GM12878 (cell line): ENCODE measurements at regions of chr6 and their contacts with region 1.

Region 1: DNA sequence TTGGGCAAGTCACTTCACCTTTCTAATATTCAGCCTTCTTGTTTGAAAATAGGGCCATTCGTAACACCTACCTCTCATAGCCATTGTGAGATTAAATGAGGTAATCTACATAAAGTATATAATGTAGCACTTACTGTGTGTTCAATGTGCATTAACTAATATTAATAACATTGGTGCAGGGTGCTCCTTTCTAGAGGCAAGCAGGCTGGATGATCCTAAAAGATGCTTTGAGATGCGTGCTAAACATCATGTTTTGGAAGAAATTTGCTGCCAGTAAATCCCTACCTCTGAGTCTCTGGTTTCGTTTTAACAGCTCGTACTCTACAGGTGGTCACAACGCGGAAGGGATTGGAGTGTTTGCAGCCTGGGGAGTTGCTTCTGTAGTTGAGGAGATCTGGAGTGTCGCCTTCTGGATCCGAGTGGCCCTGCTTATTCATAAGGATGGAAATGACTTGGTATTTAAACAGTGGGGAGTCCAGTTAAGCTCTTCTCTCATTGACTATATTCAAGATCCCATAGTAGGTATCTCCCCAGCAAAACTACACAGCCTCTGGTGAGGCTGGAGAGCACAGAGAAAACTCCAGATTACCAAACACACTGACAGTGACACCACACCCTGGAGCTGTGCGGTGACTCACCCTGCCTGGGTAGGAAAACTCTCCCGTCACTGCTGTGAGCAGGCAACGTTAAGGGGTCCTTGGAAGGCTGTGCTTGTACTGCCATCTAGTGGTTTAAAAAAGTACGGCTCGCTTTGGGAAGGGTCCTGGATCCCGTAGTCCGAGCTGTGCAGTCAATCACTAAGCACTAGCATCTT is 107.9 kb downstream of the MAP3K7 start:
- DNase-seq: peak; percentile 41
- ATAC-seq: peak; percentile 96
- H3K4me3 ChIP-seq: 0 out of 2 replicates have a peak overlapping the region, but pooled peaks have one; percentile 15
- H3K27ac ChIP-seq: no peak overlapping the region
- H3K4me1 ChIP-seq: peaks cover 4% of the 10 kb centered on the region
- H3K27me3 ChIP-seq: peaks cover 0 to 4% of the 10 kb centered on the region in 2 experiments; a peak in 1 of 4 replicates
- CTCF ChIP-seq: peak; percentile 72 to 95 (median 80); a peak in 5 of 6 replicates
- EP300 ChIP-seq: no peak
- POLR2A ChIP-seq: no peak
- RAD21 ChIP-seq: peak; percentile 99

Region 2: DNA sequence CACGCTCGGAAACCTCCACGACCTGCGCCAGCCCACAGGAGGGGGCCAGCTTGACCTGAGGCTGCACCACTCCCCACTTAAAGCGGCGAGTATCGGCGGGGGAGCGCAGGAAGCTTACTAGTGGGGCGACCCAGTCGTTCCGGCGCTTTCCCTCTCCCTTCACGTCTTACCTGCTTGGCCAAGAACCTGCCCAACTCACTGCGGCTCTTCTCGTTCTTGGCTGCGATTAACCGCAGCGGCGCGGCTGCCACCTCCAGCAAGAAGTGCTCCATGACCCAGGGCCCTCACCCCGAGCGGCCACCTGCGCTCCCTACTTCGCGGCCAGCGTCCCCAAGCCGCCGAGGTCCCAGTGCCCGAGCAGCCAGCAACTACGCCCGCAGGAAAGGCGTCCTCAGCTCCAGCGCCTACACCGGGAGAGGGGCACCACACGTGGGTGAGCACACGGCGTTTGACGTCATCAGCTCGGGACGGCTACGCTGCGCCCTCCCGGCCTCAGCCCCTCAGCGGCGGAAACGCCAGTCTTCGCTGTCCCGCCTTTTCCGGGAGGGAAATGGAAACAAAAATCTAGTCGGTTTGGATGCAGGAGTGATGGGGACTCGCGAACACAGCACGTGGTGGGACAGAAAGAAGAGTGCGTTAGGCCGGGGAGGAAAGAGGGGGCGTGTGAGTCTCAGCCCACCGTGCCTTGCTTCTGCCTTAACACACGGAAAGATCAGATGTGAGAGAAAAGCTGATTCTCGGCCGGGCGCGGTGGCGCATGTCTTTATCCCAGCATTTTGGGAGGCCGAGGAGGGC is 659.5 kb before region 1 on chr6 and contains the start of gene MDN1:
- CTCF ChIA-PET with region 1: interaction called, 3 read pairs
- POLR2A ChIA-PET with region 1: no interaction called
- RAD21 ChIA-PET with region 1: interaction called, 3 read pairs
- SMC1A ChIA-PET with region 1: no interaction called
- in situ Hi-C with region 1: no loop called
- intact Hi-C with region 1: loop called (anchors 10 kb)
- DNase-seq: peak; percentile 73
- ATAC-seq: peak; percentile 95
- H3K4me3 ChIP-seq: peak within 1 kb of the TSS; percentile 80
- H3K27ac ChIP-seq: peak within 1 kb of the TSS; percentile 88
- H3K4me1 ChIP-seq: peaks cover 10% of the 10 kb centered on the region; the same call in 1 of the 2 replicates
- H3K27me3 ChIP-seq: no peaks in the 10 kb centered on the region
- CTCF ChIP-seq: no peak
- EP300 ChIP-seq: no peak
- POLR2A ChIP-seq: peak; percentile 97
- RAD21 ChIP-seq: no peak
- polyA plus RNA-seq, gene MDN1: 19.0 to 19.6 TPM

Region 3: GRCh38 chr6:89940225-89941027 is 538.6 kb before region 1 on chr6:
- CTCF ChIA-PET with region 1: interaction called, 193 read pairs
- POLR2A ChIA-PET with region 1: no interaction called
- RAD21 ChIA-PET with region 1: interaction called, 104 read pairs
- SMC1A ChIA-PET with region 1: interaction called, 97 read pairs
- in situ Hi-C with region 1: loop called (anchors 5 kb)
- intact Hi-C with region 1: loop called (anchors 1 kb)
- DNase-seq: peak; percentile 21
- ATAC-seq: peak; percentile 99
- H3K4me3 ChIP-seq: no peak overlapping the region
- H3K27ac ChIP-seq: no peak overlapping the region
- H3K4me1 ChIP-seq: no peaks in the 10 kb centered on the region
- H3K27me3 ChIP-seq: no peaks in the 10 kb centered on the region; a peak in 3 of 4 replicates
- CTCF ChIP-seq: peak; percentile 64 to 83 (median 71)
- EP300 ChIP-seq: no peak
- POLR2A ChIP-seq: no peak
- RAD21 ChIP-seq: peak; percentile 92

Region 4: GRCh38 chr6:90103056-90103800 is 375.8 kb before region 1 on chr6:
- CTCF ChIA-PET with region 1: interaction called, 4 read pairs
- POLR2A ChIA-PET with region 1: no interaction called
- RAD21 ChIA-PET with region 1: no interaction called
- SMC1A ChIA-PET with region 1: no interaction called
- in situ Hi-C with region 1: loop called (anchors 10 kb)
- intact Hi-C with region 1: loop called (anchors 5 kb)
- DNase-seq: peak; percentile 65
- ATAC-seq: peak; percentile 86
- H3K4me3 ChIP-seq: no peak overlapping the region
- H3K27ac ChIP-seq: no peak overlapping the region
- H3K4me1 ChIP-seq: peaks cover 14% of the 10 kb centered on the region
- H3K27me3 ChIP-seq: peaks cover 0 to 4% of the 10 kb centered on the region in 2 experiments; a peak in 1 of 4 replicates
- CTCF ChIP-seq: no peak
- EP300 ChIP-seq: peak; percentile 75 to 88
- POLR2A ChIP-seq: no peak
- RAD21 ChIP-seq: no peak

Region 5: DNA sequence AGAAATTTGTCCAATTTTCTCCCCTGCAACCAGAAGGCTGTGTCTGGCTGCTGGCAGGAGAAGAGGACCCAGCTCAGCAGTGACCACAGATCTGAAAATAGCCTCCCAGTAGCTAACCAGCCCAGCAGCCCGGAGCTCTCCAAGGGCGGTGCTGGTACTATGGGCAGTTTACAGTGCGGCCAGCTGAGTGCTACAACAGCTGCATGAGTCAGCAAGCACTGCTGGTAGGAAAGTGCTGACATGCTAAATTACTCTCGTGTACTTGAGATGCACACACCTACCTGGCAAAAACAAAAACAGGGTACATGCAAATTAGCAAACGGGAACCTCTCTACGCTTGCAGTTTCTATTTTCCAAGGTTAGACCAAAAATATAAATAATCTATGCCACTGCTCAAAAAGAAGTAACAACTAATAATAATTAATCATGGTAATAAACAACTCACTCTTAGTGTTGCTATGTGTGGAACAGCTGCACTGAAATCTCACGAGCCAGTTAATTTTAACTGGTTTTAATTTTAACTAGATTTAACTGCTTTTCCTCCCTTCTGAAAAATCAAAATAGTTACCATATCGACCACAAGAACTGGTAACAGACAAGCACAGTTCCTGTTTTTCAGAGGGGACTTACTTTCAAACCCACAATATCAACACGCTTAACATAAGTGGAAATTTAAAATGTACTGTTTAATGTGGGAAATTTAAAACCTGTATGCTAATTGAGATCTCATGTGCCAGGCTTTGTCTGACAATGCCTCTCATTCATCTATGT is 193.2 kb before region 1 on chr6:
- CTCF ChIA-PET with region 1: interaction called, 64 read pairs
- POLR2A ChIA-PET with region 1: interaction called, 3 read pairs
- RAD21 ChIA-PET with region 1: interaction called, 13 read pairs
- SMC1A ChIA-PET with region 1: interaction called, 38 read pairs
- in situ Hi-C with region 1: loop called (anchors 5 kb)
- intact Hi-C with region 1: loop called (anchors 1 kb)
- DNase-seq: peak; percentile 71
- ATAC-seq: peak; percentile 88
- H3K4me3 ChIP-seq: peak overlapping the region; percentile 19; the same call in 1 of the 2 replicates
- H3K27ac ChIP-seq: peak overlapping the region; percentile 68; the same call in 1 of the 2 replicates
- H3K4me1 ChIP-seq: peaks cover 24% of the 10 kb centered on the region
- H3K27me3 ChIP-seq: peaks cover 0 to 3% of the 10 kb centered on the region in 2 experiments; a peak in 1 of 4 replicates
- CTCF ChIP-seq: no peak
- EP300 ChIP-seq: peak; percentile 34 to 70; a peak in 3 of 4 replicates
- POLR2A ChIP-seq: no peak
- RAD21 ChIP-seq: no peak

Region 6: GRCh38 chr6:90393232-90393884 is 85.6 kb before region 1 on chr6:
- CTCF ChIA-PET with region 1: interaction called, 13 read pairs
- POLR2A ChIA-PET with region 1: no interaction called
- RAD21 ChIA-PET with region 1: interaction called, 13 read pairs
- SMC1A ChIA-PET with region 1: interaction called, 9 read pairs
- in situ Hi-C with region 1: no loop called
- intact Hi-C with region 1: loop called (anchors 1 kb)
- DNase-seq: no peak
- ATAC-seq: peak; percentile 87
- H3K4me3 ChIP-seq: no peak overlapping the region
- H3K27ac ChIP-seq: no peak overlapping the region
- H3K4me1 ChIP-seq: no peaks in the 10 kb centered on the region
- H3K27me3 ChIP-seq: peaks cover 0 to 7% of the 10 kb centered on the region in 2 experiments; a peak in 2 of 4 replicates
- CTCF ChIP-seq: peak; percentile 65 to 78 (median 68)
- EP300 ChIP-seq: no peak
- POLR2A ChIP-seq: no peak
- RAD21 ChIP-seq: peak; percentile 75

Region 7: GRCh38 chr6:90508753-90509152 is 29.8 kb after region 1 on chr6:
- CTCF ChIA-PET with region 1: no interaction called
- POLR2A ChIA-PET with region 1: no interaction called
- RAD21 ChIA-PET with region 1: no interaction called
- SMC1A ChIA-PET with region 1: no interaction called
- in situ Hi-C with region 1: no loop called
- intact Hi-C with region 1: no loop called
- DNase-seq: no peak
- ATAC-seq: no peak
- H3K4me3 ChIP-seq: no peak overlapping the region
- H3K27ac ChIP-seq: no peak overlapping the region
- H3K4me1 ChIP-seq: no peaks in the 10 kb centered on the region
- H3K27me3 ChIP-seq: no peaks in the 10 kb centered on the region
- CTCF ChIP-seq: no peak; a peak in 1 of 6 replicates
- EP300 ChIP-seq: no peak
- POLR2A ChIP-seq: no peak
- RAD21 ChIP-seq: no peak